ENCODE measurements at regions of chr15 and their contacts with region 1.

Region 1: DNA sequence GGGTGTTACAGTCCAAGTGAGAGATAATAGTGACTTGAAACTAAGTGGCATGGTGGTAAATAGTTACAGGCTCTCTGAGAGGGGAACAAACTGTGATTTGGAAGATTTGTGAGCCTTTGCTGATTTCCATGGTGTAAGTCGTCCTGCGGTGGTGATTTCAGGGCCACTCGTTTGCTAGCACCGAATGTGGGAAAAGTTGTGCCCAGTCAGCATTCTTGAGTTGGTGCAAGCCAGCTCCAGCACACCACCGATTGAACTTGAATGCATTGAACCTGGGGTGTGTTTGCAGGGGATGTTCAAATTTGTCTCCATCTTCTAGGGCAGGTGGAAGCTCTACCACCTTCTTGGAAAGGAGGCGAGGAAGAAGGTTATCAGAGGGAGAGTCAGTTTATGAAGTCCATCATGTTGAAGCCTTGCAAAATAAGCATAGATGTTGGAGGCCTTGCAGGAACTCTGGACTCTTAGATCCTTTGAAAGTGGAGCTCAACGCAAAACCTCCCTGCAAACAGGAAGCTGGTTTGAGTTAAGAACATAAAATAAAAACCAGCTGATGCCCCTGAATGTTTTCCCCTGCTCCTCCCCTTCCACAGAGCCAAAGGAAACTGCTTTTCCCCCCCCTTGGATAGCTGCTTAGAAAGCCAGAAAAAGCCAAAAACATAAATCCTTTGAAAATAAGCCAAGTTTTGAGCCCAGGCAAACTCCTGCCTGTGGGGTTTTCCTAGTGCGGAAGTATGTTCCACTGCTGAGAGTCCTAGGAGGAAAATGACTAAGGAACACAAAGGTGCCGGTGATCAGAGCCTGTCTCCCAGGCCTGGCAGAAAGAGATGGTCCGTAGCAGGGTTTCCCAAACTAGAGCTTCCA is 21.9 kb downstream of the MAPKBP1 start:
- DNase-seq: no peak
- H3K4me3 Mint-ChIP-seq: no peak overlapping the region
- H3K27ac Mint-ChIP-seq: no peak overlapping the region
- H3K4me1 Mint-ChIP-seq: peaks cover 19% of the 10 kb centered on the region
- H3K27me3 Mint-ChIP-seq: no peaks in the 10 kb centered on the region

Region 2: DNA sequence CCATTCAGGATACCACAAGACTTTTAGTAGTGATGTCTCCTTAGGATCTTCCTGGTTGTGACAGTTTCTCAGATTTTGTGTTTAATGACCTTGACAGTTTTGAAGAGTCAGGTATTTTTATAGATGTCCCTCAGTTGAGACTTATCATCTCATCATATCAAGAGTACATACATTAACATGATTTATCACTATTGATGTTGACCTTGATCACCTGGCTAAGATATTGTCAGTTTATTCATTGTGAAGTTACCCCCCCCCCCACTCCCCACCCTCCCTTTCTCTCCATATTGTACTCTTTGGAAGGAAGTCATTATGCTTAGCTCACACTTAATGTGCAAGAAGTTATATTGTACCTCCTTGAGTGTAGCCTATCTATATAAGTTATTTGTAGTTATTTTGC is 93.1 kb before region 1 on chr15:
- CTCF ChIA-PET with region 1: no interaction called
- intact Hi-C with region 1: no loop called
- DNase-seq: no peak
- H3K4me3 Mint-ChIP-seq: no peak overlapping the region
- H3K27ac Mint-ChIP-seq: no peak overlapping the region
- H3K4me1 Mint-ChIP-seq: peaks cover 5% of the 10 kb centered on the region
- H3K27me3 Mint-ChIP-seq: no peaks in the 10 kb centered on the region

Region 3: GRCh38 chr15:41779662-41780157 is 16.5 kb before region 1 on chr15:
- CTCF ChIA-PET with region 1: interaction called, 19 read pairs
- intact Hi-C with region 1: loop called (anchors 2 kb)
- DNase-seq: no peak
- H3K4me3 Mint-ChIP-seq: no peak overlapping the region
- H3K27ac Mint-ChIP-seq: no peak overlapping the region
- H3K4me1 Mint-ChIP-seq: peaks cover 60% of the 10 kb centered on the region
- H3K27me3 Mint-ChIP-seq: no peaks in the 10 kb centered on the region